Activated naive CD4-positive, alpha-beta T cell treated with anti-CD3 and anti-CD28 coated beads for 36 hours (primary cell): ENCODE measurements at regions of chr7 and their contacts with region 1.

Region 1: GRCh38 chr7:105013221-105013815 is 687 bp upstream of the KMT2E start:
- DNase-seq: peak; percentile 94
- H3K4me3 Mint-ChIP-seq: peak overlapping the region; percentile 95
- H3K27ac Mint-ChIP-seq: peak overlapping the region; percentile 99
- H3K4me1 Mint-ChIP-seq: peaks cover 25% of the 10 kb centered on the region
- H3K27me3 Mint-ChIP-seq: no peaks in the 10 kb centered on the region

Region 2: GRCh38 chr7:104137971-104138370 is 875.3 kb before region 1 on chr7:
- CTCF ChIA-PET with region 1: no interaction called
- intact Hi-C with region 1: no loop called
- DNase-seq: no peak
- H3K4me3 Mint-ChIP-seq: no peak overlapping the region
- H3K27ac Mint-ChIP-seq: no peak overlapping the region
- H3K4me1 Mint-ChIP-seq: peaks cover 6% of the 10 kb centered on the region
- H3K27me3 Mint-ChIP-seq: no peaks in the 10 kb centered on the region

Region 3: GRCh38 chr7:104956753-104957450 is 56.4 kb before region 1 on chr7:
- CTCF ChIA-PET with region 1: no interaction called
- intact Hi-C with region 1: no loop called
- DNase-seq: peak; percentile 38
- H3K4me3 Mint-ChIP-seq: no peak overlapping the region
- H3K27ac Mint-ChIP-seq: peak overlapping the region; percentile 74
- H3K4me1 Mint-ChIP-seq: peaks cover 19% of the 10 kb centered on the region
- H3K27me3 Mint-ChIP-seq: no peaks in the 10 kb centered on the region

Region 4: DNA sequence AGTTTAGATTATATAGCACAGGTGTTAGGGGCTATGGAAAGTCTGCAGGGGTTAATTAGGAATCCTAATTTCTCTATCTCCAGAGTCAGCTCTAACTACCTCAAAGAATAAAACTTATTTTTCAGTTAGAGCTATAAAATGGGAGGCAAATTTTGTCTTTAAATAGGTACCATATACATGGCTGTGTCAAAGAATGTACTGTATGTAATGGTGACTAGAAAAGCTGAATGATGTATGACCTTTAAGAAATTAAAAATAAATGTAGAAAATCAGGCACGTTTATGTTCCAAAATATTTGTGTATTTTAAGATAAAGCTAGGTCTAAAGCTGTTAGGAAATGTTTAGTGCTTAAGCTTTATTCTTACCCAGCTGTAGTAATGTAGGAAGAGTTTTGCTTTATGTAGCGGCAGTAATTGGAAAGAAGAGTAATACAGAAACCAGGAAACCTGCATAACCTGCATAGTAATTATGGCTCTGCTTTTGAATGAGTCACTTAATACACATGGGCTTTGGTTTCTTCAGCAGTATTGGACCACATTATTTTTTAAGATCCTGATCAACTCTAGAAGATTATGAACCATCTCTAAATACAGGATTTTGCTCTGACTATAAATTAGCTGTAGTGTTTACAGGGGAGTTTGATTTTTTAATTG is 85.7 kb after region 1 on chr7:
- CTCF ChIA-PET with region 1: no interaction called
- intact Hi-C with region 1: loop called (anchors 1 kb)
- DNase-seq: no peak
- H3K4me3 Mint-ChIP-seq: no peak overlapping the region
- H3K27ac Mint-ChIP-seq: peak overlapping the region; percentile 73
- H3K4me1 Mint-ChIP-seq: peaks cover 59% of the 10 kb centered on the region
- H3K27me3 Mint-ChIP-seq: no peaks in the 10 kb centered on the region

Region 5: DNA sequence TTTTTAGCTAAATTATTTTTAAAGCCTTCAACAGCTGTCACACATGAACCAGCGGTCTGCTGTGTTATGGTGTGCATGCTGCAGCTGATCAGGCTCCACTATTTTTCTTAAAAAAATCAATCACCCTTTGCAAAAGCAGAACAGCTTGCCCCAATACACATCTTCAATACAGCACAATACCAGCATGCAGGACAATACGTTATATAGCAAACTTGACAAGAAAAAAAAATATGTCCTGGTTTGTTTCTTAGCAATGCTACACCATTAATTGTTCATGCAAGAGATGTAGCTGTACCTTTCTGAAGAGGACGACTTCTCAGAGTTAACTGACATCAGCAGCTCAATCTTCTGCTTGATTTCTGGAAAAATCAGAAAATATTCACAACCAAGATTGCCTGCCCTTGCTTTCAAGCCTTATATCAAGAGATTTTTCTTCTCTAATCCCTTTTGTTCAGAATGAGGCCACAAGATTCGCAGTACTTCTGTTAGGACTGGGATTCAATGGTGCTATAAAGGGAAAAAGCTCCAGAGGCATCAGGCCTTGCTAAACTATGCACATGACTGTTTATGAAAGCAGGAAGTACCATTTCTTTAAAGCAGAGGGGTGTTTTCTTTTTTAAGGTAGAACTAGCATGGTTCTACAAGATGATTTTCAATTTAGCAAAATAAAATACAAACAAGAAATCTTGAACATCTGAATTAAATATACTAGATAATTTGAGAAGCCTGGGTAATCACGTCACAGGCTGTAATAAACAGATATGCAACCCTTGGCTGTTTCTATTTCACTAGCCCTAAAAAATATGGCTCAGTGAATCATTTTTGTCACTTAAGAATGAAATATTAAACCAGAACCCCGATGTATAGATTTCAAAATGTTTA is 255.4 kb after region 1 on chr7:
- CTCF ChIA-PET with region 1: no interaction called
- intact Hi-C with region 1: loop called (anchors 1 kb)
- DNase-seq: peak; percentile 14
- H3K4me3 Mint-ChIP-seq: peak overlapping the region; percentile 72
- H3K27ac Mint-ChIP-seq: peak overlapping the region; percentile 90
- H3K4me1 Mint-ChIP-seq: peaks cover 53% of the 10 kb centered on the region
- H3K27me3 Mint-ChIP-seq: no peaks in the 10 kb centered on the region

Region 6: DNA sequence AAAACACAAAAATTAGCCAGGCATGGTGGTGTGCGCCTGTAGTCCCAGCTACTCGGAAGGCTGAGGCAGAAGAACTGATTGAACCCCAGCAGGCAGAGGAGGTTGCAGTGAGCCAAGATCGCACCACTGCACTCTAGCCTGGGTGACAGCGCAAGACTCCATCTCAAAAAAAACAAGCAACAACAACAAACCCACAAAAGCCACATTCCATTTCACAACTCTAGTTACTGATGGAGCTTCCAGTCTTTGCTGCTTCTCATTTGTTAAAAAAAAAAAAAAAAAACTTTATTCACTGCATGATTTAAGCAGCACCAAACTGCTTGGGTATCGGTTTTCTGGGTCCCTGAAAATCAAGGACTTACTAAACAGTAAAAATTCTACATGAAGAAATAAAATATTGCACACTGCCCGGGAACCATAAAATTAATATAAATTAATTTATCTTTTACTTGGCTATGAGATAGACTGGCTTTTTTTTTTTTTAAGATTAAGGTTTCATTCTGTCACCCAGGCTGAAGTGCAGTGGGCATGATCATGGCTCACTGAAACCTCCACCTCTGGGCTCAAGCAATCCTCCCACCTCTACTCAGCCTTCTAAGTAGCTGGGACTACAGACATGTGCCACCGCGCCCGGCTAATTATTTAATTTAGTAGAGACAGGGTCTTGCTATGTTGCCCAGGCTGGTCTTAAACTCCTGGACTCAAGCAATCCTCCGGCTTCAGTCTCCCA is 333.4 kb after region 1 on chr7:
- CTCF ChIA-PET with region 1: no interaction called
- intact Hi-C with region 1: loop called (anchors 2 kb)
- DNase-seq: no peak
- H3K4me3 Mint-ChIP-seq: no peak overlapping the region
- H3K27ac Mint-ChIP-seq: no peak overlapping the region
- H3K4me1 Mint-ChIP-seq: peaks cover 66% of the 10 kb centered on the region
- H3K27me3 Mint-ChIP-seq: no peaks in the 10 kb centered on the region

Region 7: DNA sequence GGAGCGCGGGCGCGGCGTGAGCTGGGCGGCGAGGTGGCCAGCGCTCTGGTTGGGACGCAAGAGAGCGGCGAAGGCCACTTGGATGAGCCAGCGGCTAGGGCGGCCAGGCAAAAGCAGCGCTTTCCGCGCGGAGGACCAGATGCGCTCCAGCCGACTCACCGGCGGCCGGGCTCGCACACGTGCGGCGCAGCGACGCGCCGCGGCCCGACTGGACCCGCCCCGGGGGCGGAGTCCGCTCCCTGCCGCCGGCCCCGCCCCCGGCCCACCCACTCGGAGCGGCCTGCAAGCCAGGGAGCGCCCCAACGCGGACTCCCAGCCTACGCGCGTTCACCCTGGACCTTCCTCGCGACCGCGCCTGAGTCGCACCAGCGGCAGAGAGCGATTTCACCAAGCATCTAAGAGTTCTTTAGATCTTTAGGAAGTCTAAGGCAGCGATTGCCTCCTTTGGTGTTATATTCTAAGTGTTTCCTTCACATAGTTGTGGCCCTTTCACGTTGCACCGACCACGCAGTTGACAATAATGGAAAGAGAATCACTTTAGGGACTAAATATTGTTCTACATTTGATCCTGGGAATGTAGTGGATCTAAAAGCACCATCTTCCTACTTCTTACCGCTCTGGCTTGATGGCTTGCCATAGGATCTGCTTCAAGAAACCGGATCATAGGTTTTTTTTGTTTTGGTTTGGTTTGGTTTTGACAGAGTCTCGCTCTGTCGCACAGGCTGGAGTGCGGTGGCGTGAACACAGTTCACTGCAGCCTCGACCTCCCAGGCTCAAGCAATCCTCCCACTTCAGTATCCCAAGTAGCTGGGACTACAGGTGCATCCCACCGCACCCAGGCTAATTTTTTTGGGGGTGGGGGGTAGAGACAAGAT is 509.0 kb after region 1 on chr7 and contains the start of gene PUS7:
- CTCF ChIA-PET with region 1: no interaction called
- intact Hi-C with region 1: loop called (anchors 2 kb)
- DNase-seq: peak; percentile 82
- H3K4me3 Mint-ChIP-seq: peak within 1 kb of the TSS; percentile 96
- H3K27ac Mint-ChIP-seq: peak within 1 kb of the TSS; percentile 81
- H3K4me1 Mint-ChIP-seq: peaks cover 19% of the 10 kb centered on the region
- H3K27me3 Mint-ChIP-seq: no peaks in the 10 kb centered on the region
- total RNA-seq, gene PUS7: 14.3 to 14.6 TPM

Region 8: DNA sequence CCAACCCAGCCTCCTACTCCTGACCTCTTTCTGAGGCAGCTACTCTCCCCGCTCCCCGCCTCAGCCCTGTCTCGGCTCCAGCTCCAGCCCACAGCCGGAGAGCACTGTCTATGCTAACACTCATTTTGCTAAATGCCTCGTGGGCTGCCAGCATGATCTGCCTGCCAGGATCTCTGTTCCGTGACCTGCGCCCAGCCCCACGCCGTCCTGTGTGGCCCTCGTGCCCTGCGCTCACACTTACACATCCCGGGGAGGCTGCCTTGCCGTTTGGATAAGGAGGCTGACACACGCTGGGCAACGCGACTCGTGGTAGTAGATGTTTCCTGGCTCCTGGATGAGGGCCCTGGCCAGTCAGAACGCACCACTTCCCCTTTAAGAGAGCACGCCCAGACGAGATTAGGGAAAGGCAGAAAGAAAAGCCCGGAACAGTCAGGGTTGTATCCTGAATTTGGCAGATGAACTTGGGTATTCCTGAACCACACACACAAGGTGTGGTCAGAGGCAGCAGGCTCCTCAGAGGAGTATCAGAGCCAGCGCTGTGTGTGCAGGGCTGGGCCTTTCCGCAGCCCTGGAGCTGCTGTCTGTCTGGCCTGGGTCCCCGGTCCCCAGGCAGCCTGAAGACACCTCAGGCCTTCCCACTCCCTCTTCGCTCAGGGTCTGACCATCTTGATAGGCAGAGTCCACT is 665.6 kb after region 1 on chr7:
- CTCF ChIA-PET with region 1: no interaction called
- intact Hi-C with region 1: loop called (anchors 5 kb)
- DNase-seq: peak; percentile 60
- H3K4me3 Mint-ChIP-seq: peak overlapping the region; percentile 82
- H3K27ac Mint-ChIP-seq: peak overlapping the region; percentile 86
- H3K4me1 Mint-ChIP-seq: peaks cover 59% of the 10 kb centered on the region
- H3K27me3 Mint-ChIP-seq: no peaks in the 10 kb centered on the region

Region 9: GRCh38 chr7:106112117-106112971 is 1099.0 kb after region 1 on chr7 and contains the start of gene SYPL1:
- CTCF ChIA-PET with region 1: no interaction called
- intact Hi-C with region 1: loop called (anchors 2 kb)
- DNase-seq: peak; percentile 94
- H3K4me3 Mint-ChIP-seq: peak within 1 kb of the TSS; percentile 85
- H3K27ac Mint-ChIP-seq: peak within 1 kb of the TSS; percentile 92
- H3K4me1 Mint-ChIP-seq: peaks cover 71% of the 10 kb centered on the region
- H3K27me3 Mint-ChIP-seq: no peaks in the 10 kb centered on the region
- total RNA-seq, gene SYPL1: 24.7 to 26.6 TPM